Ovary (tissue), 10 donors: ENCODE measurements at regions of chr22 and their contacts with region 1.

Region 1: GRCh38 chr22:40950962-40951794 is at the start of gene RBX1:
- DNase-seq: peak; percentile 97 to 98 (median 98)
- H3K4me3 ChIP-seq: peak within 1 kb of the TSS; percentile 77
- H3K27ac ChIP-seq: peak within 1 kb of the TSS; percentile 81 to 96
- H3K4me1 ChIP-seq: peaks cover 6% of the 10 kb centered on the region
- H3K27me3 ChIP-seq: no peaks in the 10 kb centered on the region
- CTCF ChIP-seq: no peak
- EP300 ChIP-seq: no peak
- POLR2A ChIP-seq: peak; percentile 89
- total RNA-seq, gene RBX1: 22.3 to 45.1 (median 38.7) TPM

Region 2: DNA sequence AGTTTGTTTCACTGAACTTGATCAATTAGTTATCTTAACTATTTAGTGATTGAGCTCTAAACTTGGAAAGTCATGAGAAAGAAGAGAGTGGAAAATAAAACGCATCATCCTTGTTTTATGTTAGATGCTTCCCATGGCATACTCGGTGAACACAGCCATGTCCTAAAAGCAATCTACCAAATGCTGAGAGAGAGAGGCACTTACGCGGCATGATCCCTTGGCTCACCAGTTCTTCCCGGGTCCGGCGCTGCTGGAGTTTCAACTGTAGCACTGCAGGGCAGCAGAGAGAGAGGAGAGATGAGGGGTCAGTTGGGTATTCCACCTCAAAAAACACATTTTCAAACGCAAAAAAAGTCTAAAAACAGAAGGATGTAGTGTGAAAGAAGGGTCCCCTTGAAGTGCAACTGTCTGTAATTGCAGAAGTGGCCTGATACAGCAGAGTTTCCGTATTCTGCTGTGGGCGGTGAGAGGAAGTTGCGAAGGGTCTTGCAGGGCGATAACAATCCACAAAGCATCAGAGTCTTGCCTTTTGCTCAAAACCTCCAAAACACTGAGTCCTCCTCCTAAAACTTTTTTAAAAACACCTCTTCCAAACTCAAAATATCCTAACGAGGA is 488.1 kb before region 1 on chr22:
- intact Hi-C with region 1: no loop called
- DNase-seq: no peak
- H3K4me3 ChIP-seq: no peak overlapping the region
- H3K27ac ChIP-seq: no peak overlapping the region
- H3K4me1 ChIP-seq: peaks cover 2% of the 10 kb centered on the region
- H3K27me3 ChIP-seq: no peaks in the 10 kb centered on the region
- CTCF ChIP-seq: no peak
- EP300 ChIP-seq: no peak
- POLR2A ChIP-seq: no peak

Region 3: GRCh38 chr22:40990430-40990829 is 39.3 kb after region 1 on chr22:
- intact Hi-C with region 1: no loop called
- DNase-seq: no peak
- H3K4me3 ChIP-seq: no peak overlapping the region
- H3K27ac ChIP-seq: no peak overlapping the region
- H3K4me1 ChIP-seq: no peaks in the 10 kb centered on the region
- H3K27me3 ChIP-seq: no peaks in the 10 kb centered on the region
- CTCF ChIP-seq: no peak
- EP300 ChIP-seq: no peak
- POLR2A ChIP-seq: no peak

Region 4: GRCh38 chr22:41022470-41023298 is 71.5 kb after region 1 on chr22:
- intact Hi-C with region 1: loop called in 2 of 4 experiments (anchors 5 kb)
- DNase-seq: peak; percentile 94 to 97 (median 96)
- H3K4me3 ChIP-seq: peak overlapping the region; percentile 70
- H3K27ac ChIP-seq: peak overlapping the region; percentile 92 to 99
- H3K4me1 ChIP-seq: no peaks in the 10 kb centered on the region
- H3K27me3 ChIP-seq: no peaks in the 10 kb centered on the region
- CTCF ChIP-seq: peak in 1 of 3 donors; percentile 9
- EP300 ChIP-seq: no peak
- POLR2A ChIP-seq: peak; percentile 86

Region 5: DNA sequence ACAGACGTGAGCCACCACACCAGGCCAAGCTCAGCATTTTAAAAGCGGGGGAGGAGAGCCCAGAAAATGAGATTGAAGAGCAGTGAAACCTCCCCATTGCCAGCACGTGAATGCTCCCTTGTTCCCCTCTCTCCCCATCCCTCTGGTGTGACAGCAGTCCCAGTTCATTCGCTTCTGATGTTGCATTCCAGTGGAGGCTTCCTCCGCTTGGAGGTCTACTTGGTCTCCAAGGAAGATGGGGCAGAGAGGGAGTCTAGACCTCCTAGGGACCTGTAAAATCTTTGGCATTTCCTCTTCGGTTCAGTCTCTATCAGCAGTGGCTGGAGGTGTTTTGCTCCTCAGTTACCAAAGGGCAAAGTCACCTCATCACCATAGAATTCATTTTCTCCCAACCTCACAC is 111.0 kb after region 1 on chr22:
- intact Hi-C with region 1: no loop called
- DNase-seq: no peak
- H3K4me3 ChIP-seq: no peak overlapping the region
- H3K27ac ChIP-seq: no peak overlapping the region
- H3K4me1 ChIP-seq: no peaks in the 10 kb centered on the region
- H3K27me3 ChIP-seq: no peaks in the 10 kb centered on the region
- CTCF ChIP-seq: no peak
- EP300 ChIP-seq: no peak
- POLR2A ChIP-seq: no peak